ENCODE measurements at regions of chr7 and their contacts with region 1.

Region 1: DNA sequence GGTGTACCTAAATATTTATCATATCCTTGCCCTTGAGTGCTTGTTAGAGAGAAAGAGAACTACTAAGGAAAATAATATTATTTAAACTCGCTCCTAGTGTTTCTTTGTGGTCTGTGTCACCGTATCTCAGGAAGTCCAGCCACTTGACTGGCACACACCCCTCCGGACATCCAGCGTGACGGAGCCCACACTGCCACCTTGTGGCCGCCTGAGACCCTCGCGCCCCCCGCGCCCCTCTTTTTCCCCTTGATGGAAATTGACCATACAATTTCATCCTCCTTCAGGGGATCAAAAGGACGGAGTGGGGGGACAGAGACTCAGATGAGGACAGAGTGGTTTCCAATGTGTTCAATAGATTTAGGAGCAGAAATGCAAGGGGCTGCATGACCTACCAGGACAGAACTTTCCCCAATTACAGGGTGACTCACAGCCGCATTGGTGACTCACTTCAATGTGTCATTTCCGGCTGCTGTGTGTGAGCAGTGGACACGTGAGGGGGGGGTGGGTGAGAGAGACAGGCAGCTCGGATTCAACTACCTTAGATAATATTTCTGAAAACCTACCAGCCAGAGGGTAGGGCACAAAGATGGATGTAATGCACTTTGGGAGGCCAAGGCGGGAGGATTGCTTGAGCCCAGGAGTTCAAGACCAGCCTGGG is 11.4 kb downstream of the SERPINE1 start:
- DNase-seq: peak; percentile 75 to 96
- ATAC-seq: peak; percentile 39 to 73
- H3K4me3 ChIP-seq: no peak overlapping the region
- H3K27ac ChIP-seq: peak overlapping the region; percentile 79 to 88
- H3K4me1 ChIP-seq: peaks cover 57% of the 10 kb centered on the region
- CTCF ChIP-seq: peak; percentile 95
- EP300 ChIP-seq: peak; percentile 28 to 65; a peak in 3 of 5 replicates
- POLR2A ChIP-seq: no peak
- RAD21 ChIP-seq: peak; percentile 57 to 90

Region 2: DNA sequence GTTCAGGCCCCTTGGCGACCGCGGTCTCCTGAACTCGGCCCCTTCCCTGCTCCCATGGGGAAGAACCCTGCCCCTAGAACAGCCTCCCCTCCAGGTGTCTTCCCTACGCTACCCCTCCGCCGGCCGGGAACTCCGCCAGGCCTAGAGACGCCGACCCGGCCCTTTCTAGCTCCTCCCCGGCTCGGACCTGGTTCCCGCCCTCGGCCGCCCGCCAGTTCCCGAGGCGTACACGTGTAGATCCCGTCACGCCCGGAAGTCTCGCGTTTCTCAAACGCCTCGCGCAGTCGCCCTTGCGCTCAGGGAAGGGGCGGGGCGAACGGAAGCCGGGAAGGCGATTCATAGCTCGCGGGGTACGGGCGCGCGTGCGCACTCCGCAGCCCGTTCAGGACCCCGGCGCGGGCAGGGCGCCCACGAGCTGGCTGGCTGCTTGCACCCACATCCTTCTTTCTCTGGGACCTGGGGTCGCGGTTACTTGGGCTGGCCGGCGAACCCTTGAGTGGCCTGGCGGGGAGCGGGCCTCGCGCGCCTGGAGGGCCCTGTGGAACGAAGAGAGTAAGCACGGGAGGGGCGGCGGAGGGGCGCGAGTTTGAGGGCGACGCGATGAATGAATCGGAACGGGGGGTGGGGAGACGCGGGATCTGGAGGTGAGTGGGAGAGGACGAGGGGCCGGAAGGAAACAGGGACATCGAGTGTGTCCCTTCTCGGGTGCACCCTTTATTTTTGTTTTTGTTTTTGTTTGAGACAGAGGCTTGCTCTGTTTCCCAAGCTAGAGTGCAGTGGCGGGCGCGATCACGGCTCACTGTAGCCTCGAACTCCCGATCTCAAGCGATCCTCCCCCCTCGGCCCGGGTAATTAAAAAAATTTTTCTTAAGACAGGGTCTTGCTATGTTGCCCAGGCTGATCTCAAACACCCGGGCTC is 432.3 kb before region 1 on chr7 and contains the start of gene POP7:
- CTCF ChIA-PET with region 1: no interaction called
- POLR2A ChIA-PET with region 1: no interaction called
- DNase-seq: peak; percentile 91 to 99
- ATAC-seq: peak; percentile 95 to 96
- H3K4me3 ChIP-seq: peak within 1 kb of the TSS; percentile 76
- H3K27ac ChIP-seq: peak within 1 kb of the TSS; percentile 91 to 96
- H3K4me1 ChIP-seq: peaks cover 12% of the 10 kb centered on the region
- CTCF ChIP-seq: no peak
- EP300 ChIP-seq: no peak
- POLR2A ChIP-seq: peak; percentile 72
- RAD21 ChIP-seq: no peak
- polyA plus RNA-seq, gene POP7: 29.5 and 37.3 TPM in 2 replicates

Region 3: GRCh38 chr7:101066141-101066832 is 72.1 kb before region 1 on chr7:
- CTCF ChIA-PET with region 1: no interaction called
- POLR2A ChIA-PET with region 1: no interaction called
- DNase-seq: no peak
- ATAC-seq: no peak
- H3K4me3 ChIP-seq: no peak overlapping the region
- H3K27ac ChIP-seq: no peak overlapping the region
- H3K4me1 ChIP-seq: no peaks in the 10 kb centered on the region
- CTCF ChIP-seq: no peak
- EP300 ChIP-seq: no peak
- POLR2A ChIP-seq: no peak
- RAD21 ChIP-seq: no peak

Region 4: DNA sequence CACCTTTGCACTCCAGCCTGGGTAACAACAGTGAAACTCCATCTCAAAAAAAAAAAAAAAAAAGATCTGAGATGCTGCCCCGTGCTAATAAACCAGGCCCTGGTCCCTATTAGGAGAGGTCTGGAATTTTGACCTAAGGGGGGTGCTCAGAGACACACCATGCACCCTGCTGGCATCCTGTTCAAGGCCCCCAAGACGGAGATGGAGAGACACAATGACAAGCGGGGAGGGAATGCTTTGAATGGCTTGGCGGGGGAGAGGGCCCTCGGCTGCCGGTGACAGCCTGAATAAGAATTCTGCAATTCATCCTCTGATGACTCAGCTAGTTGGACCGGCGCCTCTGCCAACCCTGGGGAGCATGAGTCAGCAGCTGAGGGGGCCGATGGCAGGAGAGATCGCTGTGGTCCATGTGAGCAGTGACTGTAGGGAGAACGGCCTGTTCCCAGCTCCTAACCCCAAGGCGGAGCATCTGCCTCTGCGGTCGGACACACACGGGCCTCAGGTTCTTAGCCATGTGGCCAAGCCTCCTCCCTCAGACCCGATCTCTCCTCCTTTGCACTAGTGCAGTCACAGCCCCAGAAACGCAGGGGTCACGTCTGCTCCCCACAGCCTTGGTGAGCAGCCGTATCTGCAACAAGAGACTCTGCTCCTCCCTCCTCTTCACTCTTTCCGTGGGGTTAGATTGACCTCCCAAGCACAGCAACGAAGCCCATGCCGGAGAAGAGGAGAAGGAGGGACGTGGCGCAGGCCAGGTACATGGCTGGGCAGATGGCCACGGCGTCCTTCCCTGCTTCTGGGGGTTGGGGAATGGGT is 38.2 kb before region 1 on chr7:
- CTCF ChIA-PET with region 1: interaction called, 600 read pairs
- POLR2A ChIA-PET with region 1: interaction called, 10 read pairs
- DNase-seq: peak; percentile 91 to 98
- ATAC-seq: peak; percentile 90 to 96
- H3K4me3 ChIP-seq: no peak overlapping the region; the same call in 2 of the 3 replicates
- H3K27ac ChIP-seq: peak overlapping the region; percentile 94 to 99
- H3K4me1 ChIP-seq: peaks cover 69% of the 10 kb centered on the region
- CTCF ChIP-seq: no peak
- EP300 ChIP-seq: peak; percentile 90 to 94
- POLR2A ChIP-seq: peak; percentile 22; the same call in 1 of the 2 replicates
- RAD21 ChIP-seq: peak; percentile 38 to 49

Region 5: DNA sequence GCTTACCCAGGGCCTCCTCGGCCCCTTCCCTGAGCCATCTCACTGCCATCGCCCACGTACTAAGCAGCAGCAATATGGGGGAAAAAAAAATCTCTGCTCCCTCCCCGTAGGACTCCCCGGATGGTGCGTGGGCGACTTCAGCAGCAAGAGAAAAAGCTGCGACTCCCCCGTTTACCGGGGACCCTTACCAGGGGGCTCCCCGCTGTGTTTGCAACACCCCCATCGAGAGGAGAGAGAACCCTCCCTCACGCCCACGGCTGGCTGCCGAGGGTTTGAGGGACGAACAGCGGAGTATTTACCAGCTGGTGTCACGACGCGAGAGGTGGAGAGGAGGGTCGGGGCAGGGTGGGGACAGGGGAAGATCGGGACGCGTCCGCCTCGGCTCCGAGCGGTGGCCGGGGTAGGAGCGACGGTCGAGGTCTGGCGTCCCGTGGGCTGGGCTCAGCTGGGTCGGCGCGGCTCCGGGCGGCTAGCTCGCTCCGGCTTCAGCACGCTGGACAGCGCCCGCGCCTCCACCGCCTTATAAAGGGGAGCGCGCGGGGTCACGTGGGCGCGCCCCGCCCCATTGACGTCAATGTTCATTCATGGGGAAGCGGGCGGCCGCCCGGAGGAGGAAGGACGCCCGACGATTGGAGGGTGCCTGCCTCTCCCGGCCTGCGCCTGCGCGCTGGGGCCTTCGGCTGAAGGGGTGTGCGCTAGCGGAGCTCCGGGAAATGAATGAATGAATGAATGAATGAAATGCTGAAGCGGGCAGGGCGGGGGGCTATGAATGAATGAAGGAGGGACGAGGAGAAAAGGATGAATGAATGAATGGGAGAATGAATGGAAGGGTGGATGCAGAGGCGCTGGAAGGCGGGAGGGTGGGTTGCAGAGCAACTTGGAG is 27.0 kb after region 1 on chr7 and contains the start of gene VGF:
- CTCF ChIA-PET with region 1: interaction called, 235 read pairs
- POLR2A ChIA-PET with region 1: no interaction called
- DNase-seq: peak; percentile 92 to 96
- ATAC-seq: peak; percentile 51 to 74; a peak in 5 of 6 replicates
- H3K4me3 ChIP-seq: peak within 1 kb of the TSS; percentile 54
- H3K27ac ChIP-seq: peak within 1 kb of the TSS; percentile 9 to 83; a peak in 4 of 6 replicates
- H3K4me1 ChIP-seq: peaks cover 86% of the 10 kb centered on the region
- CTCF ChIP-seq: no peak
- EP300 ChIP-seq: no peak
- POLR2A ChIP-seq: 0 out of 2 replicates have a peak, but pooled peaks have one; percentile 21
- RAD21 ChIP-seq: no peak
- polyA plus RNA-seq, gene VGF: 0.16 and 0.21 TPM in 2 replicates

Region 6: GRCh38 chr7:101201695-101202604 is 63.6 kb after region 1 on chr7:
- CTCF ChIA-PET with region 1: interaction called, 318 read pairs
- POLR2A ChIA-PET with region 1: no interaction called
- DNase-seq: no peak
- ATAC-seq: no peak
- H3K4me3 ChIP-seq: no peak overlapping the region
- H3K27ac ChIP-seq: no peak overlapping the region
- H3K4me1 ChIP-seq: peaks cover 10% of the 10 kb centered on the region
- CTCF ChIP-seq: no peak
- EP300 ChIP-seq: no peak
- POLR2A ChIP-seq: no peak
- RAD21 ChIP-seq: no peak

Region 7: GRCh38 chr7:101235050-101235449 is 96.7 kb after region 1 on chr7:
- CTCF ChIA-PET with region 1: interaction called, 10 read pairs
- POLR2A ChIA-PET with region 1: no interaction called
- DNase-seq: peak in 1 of 2 experiments; percentile 36
- ATAC-seq: peak; percentile 30 to 47; a peak in 3 of 6 replicates
- H3K4me3 ChIP-seq: no peak overlapping the region
- H3K27ac ChIP-seq: no peak overlapping the region
- H3K4me1 ChIP-seq: peaks cover 6% of the 10 kb centered on the region; the same call in 2 of the 3 replicates
- CTCF ChIP-seq: peak; percentile 35
- EP300 ChIP-seq: no peak
- POLR2A ChIP-seq: no peak
- RAD21 ChIP-seq: 0 out of 5 replicates have a peak, but pooled peaks of 1 of the 2 experiments have one; percentile 11

Region 8: DNA sequence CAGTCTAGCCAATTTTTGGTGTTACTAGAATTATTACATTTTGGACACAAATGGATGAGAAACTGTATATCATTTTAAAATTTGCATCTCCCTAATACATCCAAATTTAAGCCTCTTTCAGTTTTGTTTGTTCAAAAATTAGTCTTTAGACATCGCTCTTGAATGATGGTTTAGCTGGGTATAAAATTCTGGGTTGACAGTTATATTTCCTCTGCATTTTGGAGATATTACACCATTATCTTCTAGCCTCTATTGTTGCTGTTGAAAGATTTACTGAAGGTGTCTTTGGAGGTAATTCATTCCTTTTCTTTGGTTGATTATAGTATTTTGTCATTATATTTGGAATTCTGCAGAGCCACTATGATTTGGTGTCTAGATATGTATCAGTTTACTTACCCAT is 340.9 kb after region 1 on chr7:
- CTCF ChIA-PET with region 1: no interaction called
- POLR2A ChIA-PET with region 1: no interaction called
- DNase-seq: no peak
- ATAC-seq: no peak
- H3K4me3 ChIP-seq: no peak overlapping the region
- H3K27ac ChIP-seq: no peak overlapping the region
- H3K4me1 ChIP-seq: no peaks in the 10 kb centered on the region
- CTCF ChIP-seq: no peak
- EP300 ChIP-seq: no peak
- POLR2A ChIP-seq: no peak
- RAD21 ChIP-seq: no peak

Region 9: DNA sequence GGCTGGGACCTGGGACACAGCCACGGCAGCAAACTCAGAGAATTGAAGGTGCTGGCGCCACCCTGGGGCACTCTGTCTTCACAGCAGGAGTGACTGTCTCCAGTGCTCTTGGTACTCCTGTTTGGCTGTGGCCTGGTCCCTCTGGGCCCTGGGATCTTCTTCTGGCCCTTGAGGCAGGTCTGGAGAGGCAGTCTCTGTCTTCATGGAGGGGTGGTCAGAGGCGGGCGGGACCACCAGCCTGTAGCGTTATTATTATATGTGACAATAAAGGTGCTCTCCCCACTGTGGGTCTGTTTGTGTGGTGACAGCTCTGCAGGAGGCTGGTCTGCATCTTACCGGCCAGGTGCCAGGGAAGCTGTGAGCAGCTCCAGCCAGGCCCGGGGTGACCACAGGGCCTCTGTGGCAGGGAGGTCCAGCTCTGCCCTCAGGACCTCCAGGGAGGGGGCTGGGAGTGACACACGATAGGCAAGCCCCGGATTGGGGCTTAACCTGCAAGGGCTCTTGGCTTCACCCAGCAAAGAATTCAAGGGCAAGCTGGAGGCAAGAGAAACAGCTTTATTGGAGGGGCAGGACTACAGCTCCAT is 420.5 kb after region 1 on chr7:
- CTCF ChIA-PET with region 1: no interaction called
- POLR2A ChIA-PET with region 1: no interaction called
- DNase-seq: no peak
- ATAC-seq: peak; percentile 69 to 77
- H3K4me3 ChIP-seq: no peak overlapping the region
- H3K27ac ChIP-seq: no peak overlapping the region
- H3K4me1 ChIP-seq: no peaks in the 10 kb centered on the region
- CTCF ChIP-seq: no peak; the same call in 2 of the 3 replicates
- EP300 ChIP-seq: no peak
- POLR2A ChIP-seq: no peak
- RAD21 ChIP-seq: peak in 1 of 2 experiments; percentile 24; a peak in 1 of 5 replicates

Measured in A549 (cell line).